Activated B cell treated with CpG ODN at 0.5 μM for 24 hours (primary cell): ENCODE measurements at regions of chr1 and their contacts with region 1.

Region 1: DNA sequence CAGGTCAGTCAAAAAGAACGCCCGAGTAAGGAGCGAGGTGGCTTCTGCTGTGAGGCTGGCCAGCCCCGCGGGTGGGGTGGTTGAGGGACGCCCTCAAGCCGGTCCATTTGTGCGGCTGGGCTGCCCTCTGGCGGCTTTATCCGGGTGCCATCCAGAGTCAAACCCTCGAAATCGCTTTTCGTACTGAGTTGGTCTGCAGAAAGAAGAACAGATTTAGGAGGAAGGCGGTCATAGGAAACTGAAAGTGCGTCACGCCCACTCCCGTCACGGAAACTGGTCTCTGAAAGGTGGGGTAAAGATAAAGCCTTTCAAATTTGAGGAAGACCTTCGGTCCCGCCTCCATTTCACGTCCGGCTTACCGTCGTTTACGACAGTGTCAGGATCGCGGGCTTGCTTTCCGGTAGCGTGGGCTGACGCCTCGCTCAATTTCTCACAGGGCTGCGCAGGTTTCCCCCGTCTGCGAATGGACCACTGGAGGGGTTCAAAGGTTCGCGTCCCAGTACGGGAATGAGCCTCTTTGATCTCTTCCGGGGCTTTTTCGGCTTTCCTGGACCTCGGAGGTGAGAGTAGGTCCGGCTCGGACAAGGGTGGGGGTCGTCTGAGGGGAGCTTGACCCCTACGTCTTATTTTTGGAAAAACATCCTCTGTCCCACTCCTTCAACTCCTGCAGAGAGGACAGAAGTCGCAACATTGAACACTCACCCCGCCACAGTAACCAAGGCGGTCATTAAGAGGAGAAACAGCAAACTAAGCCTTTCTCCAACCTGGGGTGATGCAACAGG is at the start of gene HAX1:
- DNase-seq: peak; percentile 88
- ATAC-seq: peak; percentile 93
- H3K4me3 Mint-ChIP-seq: peak within 1 kb of the TSS; percentile 96
- H3K27ac Mint-ChIP-seq: peak within 1 kb of the TSS; percentile 97
- H3K4me1 Mint-ChIP-seq: peaks cover 39% of the 10 kb centered on the region
- H3K27me3 Mint-ChIP-seq: no peaks in the 10 kb centered on the region
- CTCF ChIP-seq: peak; percentile 46
- total RNA-seq, gene HAX1: 89.4 and 93.0 TPM in 2 replicates

Region 2: DNA sequence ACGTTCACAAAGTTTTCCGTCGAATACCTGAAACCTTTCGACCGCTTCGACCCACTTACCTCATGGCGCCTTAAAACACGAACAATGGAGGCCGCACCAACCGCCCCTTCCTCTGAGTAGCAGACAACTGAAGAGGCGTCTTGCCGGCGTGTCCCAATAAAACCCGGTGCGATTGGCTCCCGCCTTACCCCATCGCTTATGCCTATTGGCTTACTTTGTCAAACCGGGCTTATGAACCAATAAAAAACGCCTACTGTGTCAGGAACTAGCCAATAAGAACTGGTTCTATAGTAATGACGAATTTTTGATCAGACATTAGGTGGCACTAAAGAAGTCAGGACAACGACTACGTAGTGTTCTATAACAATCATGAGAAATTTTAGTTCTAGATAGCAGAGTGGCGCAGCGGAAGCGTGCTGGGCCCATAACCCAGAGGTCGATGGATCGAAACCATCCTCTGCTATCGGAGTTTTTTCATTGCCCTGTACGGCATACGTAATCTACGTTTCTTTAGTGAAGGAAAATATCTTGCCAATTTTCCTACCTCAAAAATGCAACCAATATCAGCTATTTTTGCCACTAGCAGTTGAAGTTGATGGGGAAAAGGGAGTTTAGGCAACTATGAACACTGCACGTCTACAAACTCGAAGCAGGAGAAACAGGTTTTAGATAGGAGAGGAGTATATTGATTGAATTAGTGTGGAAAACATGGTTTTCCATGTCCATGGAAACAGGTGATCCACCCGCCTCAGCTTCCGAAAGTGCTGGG is 601.4 kb before region 1 on chr1 and contains the start of gene ILF2:
- CTCF ChIA-PET with region 1: no interaction called
- POLR2A ChIA-PET with region 1: no interaction called
- intact Hi-C with region 1: loop called (anchors 1 kb)
- DNase-seq: peak; percentile 85
- ATAC-seq: peak; percentile 83
- H3K4me3 Mint-ChIP-seq: no peak within 1 kb of the TSS
- H3K27ac Mint-ChIP-seq: no peak within 1 kb of the TSS
- H3K4me1 Mint-ChIP-seq: peaks cover 28% of the 10 kb centered on the region
- H3K27me3 Mint-ChIP-seq: no peaks in the 10 kb centered on the region
- CTCF ChIP-seq: no peak
- total RNA-seq, gene ILF2: 182 and 191 TPM in 2 replicates

Region 3: DNA sequence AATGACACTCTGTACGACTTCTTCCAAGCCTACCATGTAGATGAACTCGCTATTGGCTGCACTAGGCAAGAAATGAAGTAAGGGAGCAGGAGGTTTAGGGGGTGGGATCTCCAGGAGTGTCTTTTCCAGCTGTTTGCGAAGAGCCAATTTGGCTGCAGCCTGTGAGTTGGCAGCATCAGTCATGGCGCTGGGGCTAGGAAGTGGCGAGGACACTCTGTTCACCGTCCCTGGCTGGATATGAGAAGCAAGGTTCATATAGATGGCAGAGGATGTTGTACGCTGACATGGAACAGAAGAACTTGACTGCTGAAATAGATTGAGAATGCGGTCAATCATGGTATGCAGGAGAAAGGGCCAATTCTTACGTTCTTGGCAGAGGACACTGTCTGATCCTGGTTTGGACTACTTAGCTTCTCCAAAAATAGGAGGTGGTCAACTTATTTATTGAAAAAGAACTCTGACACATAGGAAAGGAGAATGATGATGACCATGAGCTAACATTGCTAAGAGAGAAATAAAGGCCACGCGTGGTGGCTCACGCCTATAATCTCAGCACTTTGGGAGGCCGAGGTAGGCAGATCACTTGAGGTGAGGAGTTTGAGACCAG is 456.0 kb before region 1 on chr1:
- CTCF ChIA-PET with region 1: no interaction called
- POLR2A ChIA-PET with region 1: no interaction called
- intact Hi-C with region 1: loop called (anchors 1 kb)
- DNase-seq: no peak
- ATAC-seq: no peak
- H3K4me3 Mint-ChIP-seq: no peak overlapping the region
- H3K27ac Mint-ChIP-seq: no peak overlapping the region
- H3K4me1 Mint-ChIP-seq: peaks cover 3% of the 10 kb centered on the region
- H3K27me3 Mint-ChIP-seq: no peaks in the 10 kb centered on the region
- CTCF ChIP-seq: no peak

Region 4: DNA sequence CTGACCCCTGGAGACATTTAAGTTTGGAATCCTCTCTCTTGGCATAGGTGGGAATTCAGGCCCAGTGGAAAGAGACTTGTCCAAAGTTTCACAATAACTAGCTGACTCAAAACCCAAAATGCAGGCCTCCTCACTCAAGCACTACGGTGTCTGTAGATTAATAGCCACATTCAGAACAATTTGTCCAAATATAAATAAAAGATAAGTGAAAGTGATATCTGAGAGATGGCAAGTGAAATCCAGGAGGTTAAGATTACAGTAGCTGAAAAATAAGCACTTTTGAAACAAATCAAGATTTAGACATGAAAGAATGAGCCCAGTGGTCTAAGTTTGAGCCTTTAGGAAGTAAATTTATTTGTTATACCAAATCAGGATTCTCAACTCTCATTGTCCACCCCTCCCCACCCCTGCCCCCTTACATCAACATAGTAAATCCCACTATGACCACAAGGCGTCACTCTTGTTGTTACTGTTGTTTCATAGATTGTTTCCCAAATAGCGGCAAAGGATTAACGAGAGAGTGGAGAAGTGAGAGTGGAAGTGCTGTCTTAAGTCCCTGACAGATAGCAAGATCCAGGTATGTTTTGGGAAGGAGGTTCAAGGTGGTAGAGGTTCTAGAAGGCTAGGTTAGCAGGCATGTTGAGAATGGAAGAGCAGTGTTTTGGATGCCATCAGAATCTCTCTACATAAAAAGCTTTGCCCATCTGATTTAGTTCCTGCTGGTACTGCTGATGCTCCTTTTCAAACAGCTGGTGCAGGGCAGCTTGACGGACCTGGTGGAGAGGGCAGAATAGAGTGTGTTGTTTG is 73.4 kb before region 1 on chr1:
- CTCF ChIA-PET with region 1: interaction called, 24 read pairs
- POLR2A ChIA-PET with region 1: interaction called, 3 read pairs
- intact Hi-C with region 1: loop called (anchors 1 kb)
- DNase-seq: no peak
- ATAC-seq: peak; percentile 75
- H3K4me3 Mint-ChIP-seq: no peak overlapping the region
- H3K27ac Mint-ChIP-seq: no peak overlapping the region
- H3K4me1 Mint-ChIP-seq: no peaks in the 10 kb centered on the region
- H3K27me3 Mint-ChIP-seq: peaks cover 3% of the 10 kb centered on the region
- CTCF ChIP-seq: no peak

Region 5: GRCh38 chr1:154335025-154335714 is 62.8 kb after region 1 on chr1:
- CTCF ChIA-PET with region 1: interaction called, 24 read pairs
- POLR2A ChIA-PET with region 1: interaction called, 14 read pairs
- intact Hi-C with region 1: loop called (anchors 1 kb)
- DNase-seq: peak; percentile 69
- ATAC-seq: peak; percentile 98
- H3K4me3 Mint-ChIP-seq: peak overlapping the region; percentile 25
- H3K27ac Mint-ChIP-seq: peak overlapping the region; percentile 61
- H3K4me1 Mint-ChIP-seq: peaks cover 22% of the 10 kb centered on the region
- H3K27me3 Mint-ChIP-seq: no peaks in the 10 kb centered on the region
- CTCF ChIP-seq: peak; percentile 52

Region 6: DNA sequence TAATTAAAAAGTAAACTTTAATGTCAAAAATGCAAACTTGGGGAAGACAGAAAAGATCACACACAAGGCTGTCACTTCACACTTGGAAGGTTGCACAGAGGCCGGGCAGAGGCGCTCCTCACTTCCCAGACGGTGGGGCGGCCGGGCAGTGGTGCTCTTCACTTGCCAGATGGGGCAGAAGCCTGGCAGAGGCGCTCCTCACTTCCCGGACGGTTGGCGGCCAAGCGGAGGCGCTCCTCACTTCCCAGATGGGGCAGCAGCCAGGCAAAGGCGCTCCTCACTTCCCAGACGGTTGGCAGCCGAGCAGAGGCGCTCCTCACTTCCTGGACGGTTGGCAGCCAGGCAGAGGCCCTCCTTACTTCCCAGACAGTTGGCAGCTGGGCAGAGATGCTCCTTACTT is 106.9 kb after region 1 on chr1:
- CTCF ChIA-PET with region 1: no interaction called
- POLR2A ChIA-PET with region 1: no interaction called
- intact Hi-C with region 1: no loop called
- DNase-seq: no peak
- ATAC-seq: no peak
- H3K4me3 Mint-ChIP-seq: no peak overlapping the region
- H3K27ac Mint-ChIP-seq: no peak overlapping the region
- H3K4me1 Mint-ChIP-seq: no peaks in the 10 kb centered on the region
- H3K27me3 Mint-ChIP-seq: no peaks in the 10 kb centered on the region
- CTCF ChIP-seq: no peak